CD8-positive, alpha-beta T cell (primary cell): ENCODE measurements at regions of chr15 and their contacts with region 1.

Region 1: GRCh38 chr15:65355173-65355987 is 22.4 kb downstream of the IGDCC3 start:
- DNase-seq: no peak
- ATAC-seq: no peak
- H3K4me3 ChIP-seq: peak overlapping the region; percentile 24 to 27
- H3K4me3 Mint-ChIP-seq: peak overlapping the region; percentile 73
- H3K27ac ChIP-seq: no peak overlapping the region
- H3K27ac Mint-ChIP-seq: no peak overlapping the region
- H3K4me1 ChIP-seq: peaks cover 7% of the 10 kb centered on the region
- H3K4me1 Mint-ChIP-seq: peaks cover 6% of the 10 kb centered on the region
- H3K27me3 ChIP-seq: peaks cover 15 to 17% of the 10 kb centered on the region in 2 experiments
- H3K27me3 Mint-ChIP-seq: peaks cover 44% of the 10 kb centered on the region
- CTCF ChIP-seq: no peak

Region 2: GRCh38 chr15:63420333-63420747 is 1935.0 kb before region 1 on chr15:
- CTCF ChIA-PET with region 1: no interaction called
- POLR2A ChIA-PET with region 1: no interaction called
- intact Hi-C with region 1: loop called in 1 of 2 experiments (anchors 10 kb)
- DNase-seq: no peak
- ATAC-seq: no peak
- H3K4me3 ChIP-seq: no peak overlapping the region
- H3K4me3 Mint-ChIP-seq: no peak overlapping the region
- H3K27ac ChIP-seq: no peak overlapping the region
- H3K27ac Mint-ChIP-seq: no peak overlapping the region
- H3K4me1 ChIP-seq: no peaks in the 10 kb centered on the region
- H3K4me1 Mint-ChIP-seq: no peaks in the 10 kb centered on the region
- H3K27me3 ChIP-seq: no peaks in the 10 kb centered on the region
- H3K27me3 Mint-ChIP-seq: no peaks in the 10 kb centered on the region
- CTCF ChIP-seq: no peak

Region 3: DNA sequence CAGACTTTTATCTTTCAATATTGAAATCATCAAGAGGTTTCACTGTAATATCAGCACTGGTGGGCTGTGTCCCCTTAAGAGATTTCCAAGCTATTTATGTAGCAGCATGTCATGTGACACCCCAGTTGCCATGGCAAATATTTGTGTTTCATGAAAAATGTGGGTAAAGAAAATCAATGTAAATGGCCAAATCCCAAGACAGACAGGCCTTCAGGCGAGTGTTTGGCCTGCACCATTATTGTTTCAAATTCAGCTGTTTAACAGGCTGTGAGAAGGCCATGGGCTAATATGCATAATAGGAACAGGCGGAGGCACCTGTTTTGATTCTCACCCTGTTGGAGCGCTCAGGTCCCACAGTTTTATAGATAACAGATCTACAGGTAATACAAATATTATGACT is 2003.4 kb after region 1 on chr15:
- CTCF ChIA-PET with region 1: no interaction called
- POLR2A ChIA-PET with region 1: no interaction called
- intact Hi-C with region 1: loop called in 1 of 2 experiments (anchors 10 kb)
- DNase-seq: no peak
- ATAC-seq: no peak
- H3K4me3 ChIP-seq: no peak overlapping the region
- H3K4me3 Mint-ChIP-seq: no peak overlapping the region
- H3K27ac ChIP-seq: no peak overlapping the region
- H3K27ac Mint-ChIP-seq: no peak overlapping the region
- H3K4me1 ChIP-seq: no peaks in the 10 kb centered on the region
- H3K4me1 Mint-ChIP-seq: no peaks in the 10 kb centered on the region
- H3K27me3 ChIP-seq: no peaks in the 10 kb centered on the region
- H3K27me3 Mint-ChIP-seq: no peaks in the 10 kb centered on the region
- CTCF ChIP-seq: no peak